ENCODE measurements at regions of chr10 and their contacts with region 1.

Region 1: GRCh38 chr10:80382989-80383388 is 25.4 kb upstream of the PRXL2A start:
- DNase-seq: peak; percentile 68
- H3K4me3 ChIP-seq: peak overlapping the region in 1 of 2 experiments; percentile 7; a peak in 1 of 4 replicates
- H3K27ac ChIP-seq: no peak overlapping the region
- H3K4me1 ChIP-seq: peaks cover 0 to 3% of the 10 kb centered on the region in 2 experiments; a peak in 1 of 4 replicates
- H3K27me3 ChIP-seq: no peaks in the 10 kb centered on the region; the same call in 1 of the 2 replicates
- CTCF ChIP-seq: peak; percentile 81
- EP300 ChIP-seq: no peak
- RAD21 ChIP-seq: peak; percentile 85

Region 2: GRCh38 chr10:80408242-80409101 is 25.5 kb after region 1 on chr10 and contains the start of gene PRXL2A:
- CTCF ChIA-PET with region 1: interaction called, 11 read pairs
- POLR2A ChIA-PET with region 1: interaction called, 3 read pairs
- DNase-seq: peak; percentile 99
- H3K4me3 ChIP-seq: peak within 1 kb of the TSS; percentile 69 to 88
- H3K27ac ChIP-seq: peak within 1 kb of the TSS in 1 of 2 experiments; percentile 78; a peak in 3 of 4 replicates
- H3K4me1 ChIP-seq: peaks cover 15 to 51% of the 10 kb centered on the region in 2 experiments; a peak in 3 of 4 replicates
- H3K27me3 ChIP-seq: no peaks in the 10 kb centered on the region
- CTCF ChIP-seq: no peak
- EP300 ChIP-seq: no peak
- RAD21 ChIP-seq: no peak
- polyA plus RNA-seq, gene PRXL2A: 14.0 and 15.6 TPM in 2 replicates

Region 3: DNA sequence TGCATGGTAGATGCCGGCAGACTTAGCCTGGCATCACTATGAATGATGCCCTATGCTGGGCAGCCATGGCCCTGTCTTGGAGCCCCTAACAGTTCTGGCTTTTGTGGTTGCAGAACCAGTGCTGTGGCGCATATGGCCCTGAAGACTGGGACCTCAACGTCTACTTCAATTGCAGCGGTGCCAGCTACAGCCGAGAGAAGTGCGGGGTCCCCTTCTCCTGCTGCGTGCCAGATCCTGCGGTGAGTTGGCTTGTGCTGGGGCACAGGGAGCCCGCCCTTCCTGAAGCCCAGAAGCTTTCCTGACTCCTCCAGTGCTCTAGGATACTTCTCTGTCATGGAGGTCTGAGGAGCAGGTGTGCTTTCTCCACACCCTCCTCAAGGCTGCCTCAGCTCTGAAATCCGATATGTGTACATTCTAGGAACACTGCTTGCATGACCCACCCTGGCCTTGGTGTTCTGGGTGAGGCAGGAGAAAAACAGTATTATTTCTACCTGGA is 129.1 kb after region 1 on chr10:
- CTCF ChIA-PET with region 1: interaction called, 15 read pairs
- POLR2A ChIA-PET with region 1: no interaction called
- DNase-seq: no peak
- H3K4me3 ChIP-seq: no peak overlapping the region
- H3K27ac ChIP-seq: no peak overlapping the region
- H3K4me1 ChIP-seq: peaks cover 3 to 28% of the 10 kb centered on the region in 2 experiments; a peak in 3 of 4 replicates
- H3K27me3 ChIP-seq: no peaks in the 10 kb centered on the region
- CTCF ChIP-seq: no peak
- EP300 ChIP-seq: no peak
- RAD21 ChIP-seq: no peak